CD4-positive, alpha-beta T cell (primary cell): ENCODE measurements at regions of chr17 and their contacts with region 1.

Region 1: GRCh38 chr17:41648411-41649195 is 24.2 kb upstream of the KRT17 start:
- DNase-seq: peak; percentile 70 to 92 (median 82)
- ATAC-seq: peak; percentile 88
- H3K4me3 ChIP-seq: peak overlapping the region; percentile 67
- H3K4me3 Mint-ChIP-seq: peak overlapping the region; percentile 86
- H3K27ac ChIP-seq: no peak overlapping the region
- H3K27ac Mint-ChIP-seq: peak overlapping the region; percentile 50
- H3K4me1 ChIP-seq: peaks cover 15% of the 10 kb centered on the region
- H3K4me1 Mint-ChIP-seq: peaks cover 12% of the 10 kb centered on the region
- H3K27me3 ChIP-seq: no peaks in the 10 kb centered on the region
- H3K27me3 Mint-ChIP-seq: no peaks in the 10 kb centered on the region
- CTCF ChIP-seq: peak; percentile 81

Region 2: GRCh38 chr17:40803617-40804082 is 845.0 kb before region 1 on chr17:
- CTCF ChIA-PET with region 1: interaction called, 8 read pairs
- POLR2A ChIA-PET with region 1: no interaction called
- intact Hi-C with region 1: loop called (anchors 5 kb)
- DNase-seq: peak; percentile 51 to 85 (median 66)
- ATAC-seq: peak; percentile 89
- H3K4me3 ChIP-seq: no peak overlapping the region
- H3K4me3 Mint-ChIP-seq: no peak overlapping the region
- H3K27ac ChIP-seq: no peak overlapping the region
- H3K27ac Mint-ChIP-seq: no peak overlapping the region
- H3K4me1 ChIP-seq: no peaks in the 10 kb centered on the region
- H3K4me1 Mint-ChIP-seq: peaks cover 4% of the 10 kb centered on the region
- H3K27me3 ChIP-seq: peaks cover 11 to 58% of the 10 kb centered on the region in 2 experiments
- H3K27me3 Mint-ChIP-seq: peaks cover 54% of the 10 kb centered on the region
- CTCF ChIP-seq: peak; percentile 91

Region 3: DNA sequence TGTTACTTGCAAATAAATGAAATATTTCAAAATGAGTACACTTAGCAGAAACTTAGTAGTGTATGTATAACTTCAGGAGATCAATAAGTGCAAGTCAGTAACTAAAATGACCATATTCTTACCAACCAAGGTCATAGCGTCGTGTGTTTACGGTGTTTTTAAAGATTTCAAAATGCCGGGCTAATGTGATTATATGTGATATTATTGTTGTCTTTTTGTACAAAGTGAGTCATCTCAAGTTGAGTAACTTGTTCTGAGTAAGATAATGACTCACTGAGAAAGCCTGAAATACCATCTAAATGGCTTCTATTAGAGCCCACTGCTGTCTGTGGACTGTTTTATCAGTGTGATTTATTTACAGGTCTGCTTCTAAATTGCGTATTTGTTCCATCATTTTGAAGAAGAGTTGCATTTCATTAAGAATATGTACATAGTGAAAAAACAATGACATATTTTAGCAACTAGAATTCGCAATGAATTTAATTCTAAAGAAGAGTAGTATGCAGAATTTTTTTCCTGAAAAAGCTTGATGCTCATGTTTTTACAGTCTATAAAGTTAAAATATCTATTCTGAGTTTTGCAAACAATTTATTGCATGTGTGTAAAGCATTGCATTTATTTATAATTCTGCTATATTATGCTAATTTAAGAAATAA is 794.3 kb before region 1 on chr17:
- CTCF ChIA-PET with region 1: interaction called, 16 read pairs
- POLR2A ChIA-PET with region 1: interaction called, 4 read pairs
- intact Hi-C with region 1: loop called (anchors 1 to 5 kb)
- DNase-seq: peak in 1 of 14 experiments; percentile 3
- ATAC-seq: no peak
- H3K4me3 ChIP-seq: no peak overlapping the region
- H3K4me3 Mint-ChIP-seq: no peak overlapping the region
- H3K27ac ChIP-seq: no peak overlapping the region
- H3K27ac Mint-ChIP-seq: no peak overlapping the region
- H3K4me1 ChIP-seq: no peaks in the 10 kb centered on the region
- H3K4me1 Mint-ChIP-seq: peaks cover 4% of the 10 kb centered on the region
- H3K27me3 ChIP-seq: peaks cover 0 to 22% of the 10 kb centered on the region in 2 experiments
- H3K27me3 Mint-ChIP-seq: peaks cover 34% of the 10 kb centered on the region
- CTCF ChIP-seq: no peak

Region 4: DNA sequence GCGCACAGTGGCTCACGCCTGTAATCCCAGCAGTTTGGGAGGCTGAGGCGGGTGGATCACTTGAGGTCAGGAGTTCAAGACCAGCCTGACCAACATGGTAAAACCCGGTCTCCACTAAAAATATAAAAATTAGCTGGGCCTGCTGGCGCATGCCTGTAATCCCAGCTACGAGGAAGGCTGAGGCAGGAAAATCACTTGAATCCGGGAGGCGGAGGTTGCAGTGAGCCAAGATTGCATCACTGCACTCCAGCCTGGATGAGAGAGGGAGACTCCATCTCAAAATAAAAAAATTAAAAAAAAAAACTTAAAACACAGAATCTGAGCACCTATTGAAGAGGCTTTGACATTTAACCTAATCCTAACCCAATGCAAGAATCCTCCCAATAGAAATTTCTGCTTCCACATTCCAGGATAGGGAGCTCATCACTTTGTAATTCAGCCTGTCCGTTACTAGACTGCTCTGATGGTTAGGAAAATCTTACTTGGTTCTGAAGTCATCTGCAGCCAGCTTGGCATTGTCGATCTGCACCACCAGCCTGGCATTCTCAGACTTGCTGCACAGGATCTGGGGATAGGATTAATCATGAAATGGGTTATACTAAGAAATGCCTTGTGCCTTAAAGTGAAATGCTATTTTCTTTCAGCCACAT is 281.1 kb before region 1 on chr17:
- CTCF ChIA-PET with region 1: no interaction called
- POLR2A ChIA-PET with region 1: no interaction called
- intact Hi-C with region 1: no loop called
- DNase-seq: no peak
- ATAC-seq: no peak
- H3K4me3 ChIP-seq: no peak overlapping the region
- H3K4me3 Mint-ChIP-seq: no peak overlapping the region
- H3K27ac ChIP-seq: no peak overlapping the region
- H3K27ac Mint-ChIP-seq: no peak overlapping the region
- H3K4me1 ChIP-seq: peaks cover 2% of the 10 kb centered on the region
- H3K4me1 Mint-ChIP-seq: peaks cover 9% of the 10 kb centered on the region
- H3K27me3 ChIP-seq: no peaks in the 10 kb centered on the region
- H3K27me3 Mint-ChIP-seq: no peaks in the 10 kb centered on the region
- CTCF ChIP-seq: no peak

Region 5: GRCh38 chr17:41678907-41679739 is 30.5 kb after region 1 on chr17:
- CTCF ChIA-PET with region 1: interaction called, 15 read pairs
- POLR2A ChIA-PET with region 1: no interaction called
- intact Hi-C with region 1: no loop called
- DNase-seq: peak in 12 of 14 experiments; percentile 18 to 94 (median 54)
- ATAC-seq: peak; percentile 91
- H3K4me3 ChIP-seq: peak overlapping the region; percentile 38
- H3K4me3 Mint-ChIP-seq: peak overlapping the region; percentile 83
- H3K27ac ChIP-seq: peak overlapping the region; percentile 73 to 74
- H3K27ac Mint-ChIP-seq: peak overlapping the region; percentile 87
- H3K4me1 ChIP-seq: peaks cover 40% of the 10 kb centered on the region
- H3K4me1 Mint-ChIP-seq: peaks cover 20% of the 10 kb centered on the region
- H3K27me3 ChIP-seq: no peaks in the 10 kb centered on the region
- H3K27me3 Mint-ChIP-seq: no peaks in the 10 kb centered on the region
- CTCF ChIP-seq: peak; percentile 28